T-cell (primary cell): ENCODE measurements at regions of chr4 and their contacts with region 1.

Region 1: GRCh38 chr4:112231779-112232713 is at the start of gene AP1AR:
- DNase-seq: peak; percentile 44 to 86 (median 66)
- ATAC-seq: peak; percentile 63 to 72 (median 68)
- H3K4me3 ChIP-seq: peak within 1 kb of the TSS; percentile 83 to 84
- H3K4me3 Mint-ChIP-seq: peak within 1 kb of the TSS; percentile 86 to 94 (median 89)
- H3K27ac ChIP-seq: peak within 1 kb of the TSS; percentile 93
- H3K27ac Mint-ChIP-seq: peak within 1 kb of the TSS; percentile 99
- H3K4me1 ChIP-seq: peaks cover 8 to 21% of the 10 kb centered on the region in 2 experiments
- H3K4me1 Mint-ChIP-seq: peaks cover 42% of the 10 kb centered on the region in 3 donors
- H3K27me3 ChIP-seq: peaks cover 0 to 3% of the 10 kb centered on the region in 2 experiments
- H3K27me3 Mint-ChIP-seq: peaks cover 0 to 1% of the 10 kb centered on the region in 2 donors
- total RNA-seq, gene AP1AR: 13.9 to 21.4 (median 20.3) TPM

Region 2: GRCh38 chr4:112099701-112100297 is 132.2 kb before region 1 on chr4:
- CTCF ChIA-PET with region 1: interaction called, 14 to 27 read pairs
- POLR2A ChIA-PET with region 1: interaction called in 1 of 2 experiments, 3 read pairs
- DNase-seq: peak in 2 of 35 experiments; percentile 5 to 67
- ATAC-seq: peak in 3 of 4 experiments; percentile 53 to 83 (median 63)
- H3K4me3 ChIP-seq: no peak overlapping the region
- H3K4me3 Mint-ChIP-seq: no peak overlapping the region
- H3K27ac ChIP-seq: no peak overlapping the region
- H3K27ac Mint-ChIP-seq: no peak overlapping the region
- H3K4me1 ChIP-seq: no peaks in the 10 kb centered on the region
- H3K4me1 Mint-ChIP-seq: peaks cover 0 to 5% (median 0%) of the 10 kb centered on the region in 3 donors
- H3K27me3 ChIP-seq: no peaks in the 10 kb centered on the region
- H3K27me3 Mint-ChIP-seq: peaks cover 3 to 4% of the 10 kb centered on the region in 2 donors

Region 3: GRCh38 chr4:112214390-112215264 is 17.4 kb before region 1 on chr4:
- CTCF ChIA-PET with region 1: interaction called, 8 to 10 read pairs
- POLR2A ChIA-PET with region 1: interaction called in 1 of 2 experiments, 9 read pairs
- DNase-seq: peak in 1 of 35 experiments; percentile 50
- ATAC-seq: no peak
- H3K4me3 ChIP-seq: no peak overlapping the region
- H3K4me3 Mint-ChIP-seq: no peak overlapping the region
- H3K27ac ChIP-seq: no peak overlapping the region
- H3K27ac Mint-ChIP-seq: no peak overlapping the region
- H3K4me1 ChIP-seq: no peaks in the 10 kb centered on the region
- H3K4me1 Mint-ChIP-seq: peaks cover 0 to 7% (median 3%) of the 10 kb centered on the region in 3 donors
- H3K27me3 ChIP-seq: no peaks in the 10 kb centered on the region
- H3K27me3 Mint-ChIP-seq: no peaks in the 10 kb centered on the region

Region 4: DNA sequence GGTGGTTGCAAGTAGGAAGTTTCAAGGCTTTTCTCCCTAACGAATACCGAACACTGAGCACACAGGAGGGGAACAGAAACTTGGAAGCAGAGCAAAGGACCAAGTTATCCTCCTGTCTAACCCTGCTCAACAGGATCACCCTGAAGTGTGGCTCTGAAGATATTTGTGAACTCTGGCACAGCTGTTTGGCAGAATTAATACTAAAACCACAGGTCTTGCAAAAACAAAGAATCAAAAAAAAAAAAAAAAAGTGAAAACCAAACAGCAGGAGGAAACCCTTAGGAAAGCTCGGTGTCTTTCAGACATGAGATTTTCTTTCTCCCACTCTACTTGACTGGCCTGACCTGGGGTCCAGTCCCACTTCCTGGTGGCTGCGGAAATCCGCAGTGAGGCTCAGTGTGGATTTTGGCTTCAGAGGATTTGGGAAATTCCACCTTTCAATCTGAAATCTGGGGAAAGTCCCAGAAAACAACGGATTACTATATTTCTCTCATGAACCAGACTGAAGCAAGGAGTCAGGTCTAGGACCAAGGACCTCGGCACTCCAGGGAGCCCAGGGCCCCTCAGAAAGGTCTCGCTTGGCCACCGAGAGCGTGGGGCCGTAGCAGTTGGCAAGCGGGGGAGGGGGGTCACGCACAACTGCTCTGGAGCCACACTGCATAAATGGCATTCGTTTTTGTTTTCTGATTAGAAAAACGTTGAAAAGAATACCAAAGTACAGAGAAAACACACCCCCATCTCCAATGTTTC is 52.8 kb after region 1 on chr4:
- CTCF ChIA-PET with region 1: interaction called, 4 to 6 read pairs
- POLR2A ChIA-PET with region 1: interaction called in 1 of 2 experiments, 11 read pairs
- DNase-seq: peak in 1 of 35 experiments; percentile 70
- ATAC-seq: no peak
- H3K4me3 ChIP-seq: peak overlapping the region; percentile 85 to 93
- H3K4me3 Mint-ChIP-seq: peak overlapping the region; percentile 89 to 93 (median 91)
- H3K27ac ChIP-seq: peak overlapping the region; percentile 69
- H3K27ac Mint-ChIP-seq: peak overlapping the region; percentile 71 to 74
- H3K4me1 ChIP-seq: peaks cover 21 to 60% of the 10 kb centered on the region in 2 experiments
- H3K4me1 Mint-ChIP-seq: peaks cover 78 to 86% (median 85%) of the 10 kb centered on the region in 3 donors
- H3K27me3 ChIP-seq: no peaks in the 10 kb centered on the region
- H3K27me3 Mint-ChIP-seq: no peaks in the 10 kb centered on the region